Activated B cell treated with CpG ODN at 0.5 μM for 24 hours (primary cell): ENCODE measurements at regions of chr1 and their contacts with region 1.

Region 1: GRCh38 chr1:212630158-212630900 is 21.8 kb downstream of the ATF3 start:
- DNase-seq: peak; percentile 58
- ATAC-seq: peak; percentile 98
- H3K4me3 Mint-ChIP-seq: no peak overlapping the region
- H3K27ac Mint-ChIP-seq: no peak overlapping the region
- H3K4me1 Mint-ChIP-seq: peaks cover 19% of the 10 kb centered on the region
- H3K27me3 Mint-ChIP-seq: peaks cover 12% of the 10 kb centered on the region
- CTCF ChIP-seq: peak; percentile 76

Region 2: GRCh38 chr1:212386029-212386428 is 244.3 kb before region 1 on chr1:
- CTCF ChIA-PET with region 1: no interaction called
- POLR2A ChIA-PET with region 1: no interaction called
- intact Hi-C with region 1: no loop called
- DNase-seq: no peak
- ATAC-seq: no peak
- H3K4me3 Mint-ChIP-seq: no peak overlapping the region
- H3K27ac Mint-ChIP-seq: no peak overlapping the region
- H3K4me1 Mint-ChIP-seq: no peaks in the 10 kb centered on the region
- H3K27me3 Mint-ChIP-seq: no peaks in the 10 kb centered on the region
- CTCF ChIP-seq: no peak

Region 3: GRCh38 chr1:212583633-212584032 is 46.7 kb before region 1 on chr1:
- CTCF ChIA-PET with region 1: no interaction called
- POLR2A ChIA-PET with region 1: no interaction called
- intact Hi-C with region 1: no loop called
- DNase-seq: no peak
- ATAC-seq: no peak
- H3K4me3 Mint-ChIP-seq: no peak overlapping the region
- H3K27ac Mint-ChIP-seq: no peak overlapping the region
- H3K4me1 Mint-ChIP-seq: peaks cover 12% of the 10 kb centered on the region
- H3K27me3 Mint-ChIP-seq: peaks cover 36% of the 10 kb centered on the region
- CTCF ChIP-seq: no peak

Region 4: DNA sequence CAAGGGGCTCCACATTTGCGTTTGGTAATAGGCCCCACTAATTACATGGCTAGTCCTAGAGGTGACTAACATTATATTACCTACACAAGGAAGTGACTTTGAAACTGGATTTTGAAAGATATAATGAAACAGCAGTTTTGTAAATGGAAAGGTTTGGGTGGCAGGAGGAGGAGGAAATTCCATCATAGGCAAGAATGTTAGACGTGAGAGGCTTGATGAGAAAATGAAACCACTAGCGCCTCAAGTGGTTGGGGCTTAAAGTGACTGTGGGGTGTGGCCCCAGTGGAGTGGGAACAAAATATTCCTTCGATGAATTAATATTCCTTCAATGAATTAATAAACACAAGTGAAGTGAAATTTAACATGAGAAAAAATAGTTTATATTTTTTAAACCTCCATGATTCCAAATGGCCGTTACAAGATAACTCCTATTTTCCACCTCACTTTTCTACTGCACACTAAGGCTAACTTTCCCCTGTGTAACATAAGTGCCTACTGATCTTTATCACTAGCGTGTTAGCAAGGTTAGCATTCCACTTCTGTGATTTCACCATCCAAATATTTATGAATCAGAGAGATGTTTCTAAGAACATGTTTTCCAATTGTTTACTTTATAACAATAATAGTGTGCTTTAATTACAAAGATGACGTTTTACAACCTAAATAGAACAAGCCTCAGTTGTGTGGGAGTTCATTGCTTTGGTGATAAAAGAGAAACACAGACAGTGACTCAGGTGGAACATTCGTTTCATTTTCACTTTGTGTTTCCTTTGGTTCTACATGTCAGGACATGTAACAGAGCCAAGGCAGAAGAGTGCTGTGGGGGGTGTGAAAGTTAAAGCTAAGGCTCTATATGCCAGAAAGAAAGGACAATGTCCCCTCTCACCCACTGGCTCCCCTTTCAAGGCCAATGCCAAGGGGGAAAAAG is 34.3 kb before region 1 on chr1:
- CTCF ChIA-PET with region 1: no interaction called
- POLR2A ChIA-PET with region 1: no interaction called
- intact Hi-C with region 1: loop called (anchors 1 kb)
- DNase-seq: no peak
- ATAC-seq: peak; percentile 90
- H3K4me3 Mint-ChIP-seq: peak overlapping the region; percentile 72
- H3K27ac Mint-ChIP-seq: peak overlapping the region; percentile 84
- H3K4me1 Mint-ChIP-seq: peaks cover 16% of the 10 kb centered on the region
- H3K27me3 Mint-ChIP-seq: peaks cover 20% of the 10 kb centered on the region
- CTCF ChIP-seq: no peak

Region 5: DNA sequence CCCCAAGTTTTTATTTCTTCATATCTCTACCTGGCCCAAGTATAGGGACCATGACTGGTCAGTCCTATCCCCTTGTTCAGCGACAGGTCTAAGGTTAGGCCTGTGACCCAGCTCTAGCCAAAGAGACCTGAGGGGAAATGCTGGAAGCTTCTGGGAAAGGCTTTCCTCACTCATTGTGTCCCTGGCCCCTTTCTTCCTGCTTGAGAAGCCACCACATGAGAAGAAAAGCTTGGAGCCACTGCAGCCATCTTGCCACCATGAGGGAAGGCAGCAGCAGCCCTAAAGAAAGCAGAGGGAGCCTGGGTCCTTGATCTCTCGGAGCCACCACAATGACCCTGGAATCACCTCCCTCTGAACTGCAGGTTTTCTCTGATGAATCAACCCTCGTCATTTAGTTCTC is 21.6 kb after region 1 on chr1:
- CTCF ChIA-PET with region 1: interaction called, 3 read pairs
- POLR2A ChIA-PET with region 1: no interaction called
- intact Hi-C with region 1: loop called (anchors 2 kb)
- DNase-seq: no peak
- ATAC-seq: no peak
- H3K4me3 Mint-ChIP-seq: no peak overlapping the region
- H3K27ac Mint-ChIP-seq: no peak overlapping the region
- H3K4me1 Mint-ChIP-seq: no peaks in the 10 kb centered on the region
- H3K27me3 Mint-ChIP-seq: peaks cover 9% of the 10 kb centered on the region
- CTCF ChIP-seq: no peak